Ovary (tissue), 10 donors: ENCODE measurements at regions of chr7 and their contacts with region 1.

Region 1: GRCh38 chr7:129816742-129817141 is 136.0 kb downstream of the UBE2H start:
- DNase-seq: no peak
- H3K4me3 ChIP-seq: no peak overlapping the region
- H3K27ac ChIP-seq: no peak overlapping the region
- H3K4me1 ChIP-seq: no peaks in the 10 kb centered on the region
- H3K27me3 ChIP-seq: no peaks in the 10 kb centered on the region
- CTCF ChIP-seq: no peak
- EP300 ChIP-seq: no peak
- POLR2A ChIP-seq: no peak

Region 2: DNA sequence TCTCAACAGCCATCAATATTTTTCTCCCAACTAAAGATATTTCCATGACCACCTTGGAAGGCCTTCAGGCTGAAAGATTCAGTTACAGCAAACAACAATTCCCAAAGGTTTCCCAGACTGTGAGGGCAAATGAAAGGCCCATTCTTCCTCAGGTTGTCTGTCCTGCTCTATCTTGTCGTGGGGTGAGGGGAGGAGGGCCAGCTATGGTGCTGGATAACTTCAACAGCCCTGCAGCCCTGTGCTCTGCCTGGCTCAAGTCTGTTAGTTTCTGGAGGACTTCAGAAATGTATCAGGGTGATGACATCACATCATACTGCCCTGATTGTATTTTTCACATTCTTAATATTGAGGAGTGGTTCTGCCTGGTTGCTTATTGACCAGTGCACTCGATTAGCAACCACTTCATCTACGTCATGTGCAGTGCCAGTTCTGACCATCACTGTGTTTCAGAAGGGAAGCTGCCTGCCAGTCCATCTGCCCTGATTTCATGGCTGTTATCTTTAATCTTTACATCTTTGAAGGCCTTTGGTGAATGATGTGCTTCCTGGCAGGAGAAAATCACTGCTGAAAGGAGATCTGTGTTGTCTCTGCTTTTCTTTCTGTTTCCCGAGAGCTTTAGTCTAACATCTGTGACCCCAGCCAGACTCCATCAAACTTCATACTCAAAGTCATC is 69.7 kb before region 1 on chr7:
- intact Hi-C with region 1: loop called in 1 of 4 experiments (anchors 2 kb)
- DNase-seq: no peak
- H3K4me3 ChIP-seq: no peak overlapping the region
- H3K27ac ChIP-seq: no peak overlapping the region
- H3K4me1 ChIP-seq: no peaks in the 10 kb centered on the region
- H3K27me3 ChIP-seq: no peaks in the 10 kb centered on the region
- CTCF ChIP-seq: no peak
- EP300 ChIP-seq: no peak
- POLR2A ChIP-seq: no peak

Region 3: GRCh38 chr7:130063036-130063435 is 246.3 kb after region 1 on chr7:
- intact Hi-C with region 1: no loop called
- DNase-seq: peak in 2 of 5 donors; percentile 40 to 45
- H3K4me3 ChIP-seq: no peak overlapping the region
- H3K27ac ChIP-seq: no peak overlapping the region
- H3K4me1 ChIP-seq: no peaks in the 10 kb centered on the region
- H3K27me3 ChIP-seq: no peaks in the 10 kb centered on the region
- CTCF ChIP-seq: no peak
- EP300 ChIP-seq: no peak
- POLR2A ChIP-seq: no peak